Heart left ventricle (tissue), 16 donors: ENCODE measurements at regions of chr20 and their contacts with region 1.

Region 1: GRCh38 chr20:13119583-13119982 is 101.5 kb upstream of the ISM1 start:
- DNase-seq: peak in 1 of 5 donors; percentile 17
- ATAC-seq: peak in 3 of 4 donors; percentile 72 to 83 (median 72)
- H3K4me3 ChIP-seq: no peak overlapping the region
- H3K27ac ChIP-seq: no peak overlapping the region
- H3K4me1 ChIP-seq: no peaks in the 10 kb centered on the region
- H3K27me3 ChIP-seq: no peaks in the 10 kb centered on the region
- CTCF ChIP-seq: peak; percentile 80 to 91 (median 86)
- POLR2A ChIP-seq: no peak

Region 2: DNA sequence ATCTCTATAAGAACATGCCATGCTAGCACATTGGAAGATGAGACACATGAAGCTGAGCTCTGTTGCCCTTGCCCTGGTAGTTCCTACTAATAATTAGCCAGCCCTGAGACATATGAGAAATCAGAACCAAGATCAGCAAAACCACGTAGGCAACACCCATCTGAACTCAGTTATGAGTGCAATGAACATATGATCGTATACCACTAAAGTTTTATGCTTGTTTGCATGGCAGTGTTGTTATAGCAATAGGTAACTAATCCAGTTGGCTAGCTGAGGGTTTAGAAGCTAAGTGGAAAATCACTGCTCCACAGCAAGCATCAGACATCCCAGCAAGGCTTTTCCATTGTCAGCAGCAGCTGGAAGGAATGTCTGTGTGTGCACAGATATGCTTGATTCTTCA is 1021.2 kb before region 1 on chr20:
- intact Hi-C with region 1: no loop called
- DNase-seq: no peak
- ATAC-seq: no peak
- H3K4me3 ChIP-seq: no peak overlapping the region
- H3K27ac ChIP-seq: no peak overlapping the region
- H3K4me1 ChIP-seq: no peaks in the 10 kb centered on the region
- H3K27me3 ChIP-seq: no peaks in the 10 kb centered on the region
- CTCF ChIP-seq: no peak
- POLR2A ChIP-seq: no peak

Region 3: GRCh38 chr20:13041574-13042457 is 77.8 kb before region 1 on chr20:
- intact Hi-C with region 1: no loop called
- DNase-seq: no peak
- ATAC-seq: no peak
- H3K4me3 ChIP-seq: no peak overlapping the region
- H3K27ac ChIP-seq: no peak overlapping the region
- H3K4me1 ChIP-seq: peaks cover 0 to 9% (median 0%) of the 10 kb centered on the region in 12 donors
- H3K27me3 ChIP-seq: no peaks in the 10 kb centered on the region
- CTCF ChIP-seq: no peak
- POLR2A ChIP-seq: no peak

Region 4: DNA sequence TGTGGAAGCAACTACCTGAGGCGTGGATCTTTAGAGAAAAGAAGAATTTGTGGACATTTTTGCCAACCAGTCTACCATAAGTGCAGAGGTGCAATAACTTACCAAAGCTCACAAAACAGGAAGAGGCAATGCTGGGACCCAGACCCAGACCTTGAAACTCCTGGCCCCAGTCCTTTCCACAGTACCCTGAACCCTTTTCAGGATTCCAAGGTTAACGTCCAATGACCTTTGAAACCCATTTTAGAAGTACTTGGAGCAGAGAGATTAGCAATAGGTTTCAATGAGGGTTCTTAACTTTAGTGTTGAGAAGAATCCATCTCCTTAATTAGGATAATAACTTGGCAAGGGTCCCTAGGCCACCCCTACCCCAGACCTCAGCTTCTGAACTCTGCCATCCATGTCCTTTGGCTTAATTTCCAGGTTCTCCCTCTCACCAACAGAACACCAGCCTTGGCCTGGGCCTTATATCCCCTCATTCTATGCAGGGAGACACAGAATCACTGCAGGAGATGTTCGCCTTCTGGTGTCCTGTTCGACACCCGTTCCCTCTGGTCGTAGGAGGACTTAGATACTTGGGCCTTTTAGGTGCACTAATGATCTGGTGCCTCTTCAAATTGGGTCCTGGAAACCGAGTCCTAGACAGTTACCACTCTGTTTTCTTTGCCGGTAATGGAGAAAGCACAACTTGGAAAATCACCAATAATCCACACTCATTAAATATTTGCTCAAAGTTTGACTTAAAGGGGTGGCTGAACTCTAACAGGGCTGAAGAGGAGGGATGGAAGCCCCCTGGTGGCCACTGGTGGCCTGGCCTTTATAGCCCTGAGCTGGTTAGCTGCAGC is 142.1 kb after region 1 on chr20:
- intact Hi-C with region 1: loop called in 7 of 10 experiments (anchors 1 to 10 kb)
- DNase-seq: peak in 3 of 5 donors; percentile 37 to 53 (median 49)
- ATAC-seq: peak; percentile 55 to 83 (median 69)
- H3K4me3 ChIP-seq: no peak overlapping the region
- H3K27ac ChIP-seq: no peak overlapping the region
- H3K4me1 ChIP-seq: peaks cover 0 to 4% (median 0%) of the 10 kb centered on the region in 12 donors
- H3K27me3 ChIP-seq: no peaks in the 10 kb centered on the region
- CTCF ChIP-seq: peak; percentile 57 to 79 (median 70)
- POLR2A ChIP-seq: no peak

Region 5: GRCh38 chr20:13546497-13547131 is 427.0 kb after region 1 on chr20:
- intact Hi-C with region 1: loop called in 9 of 10 experiments (anchors 2 to 10 kb)
- DNase-seq: peak; percentile 45 to 75 (median 58)
- ATAC-seq: peak in 3 of 4 donors; percentile 41 to 58 (median 49)
- H3K4me3 ChIP-seq: no peak overlapping the region
- H3K27ac ChIP-seq: no peak overlapping the region
- H3K4me1 ChIP-seq: peaks cover 0 to 3% (median 0%) of the 10 kb centered on the region in 12 donors
- H3K27me3 ChIP-seq: no peaks in the 10 kb centered on the region
- CTCF ChIP-seq: peak; percentile 70 to 86 (median 82)
- POLR2A ChIP-seq: no peak

Region 6: DNA sequence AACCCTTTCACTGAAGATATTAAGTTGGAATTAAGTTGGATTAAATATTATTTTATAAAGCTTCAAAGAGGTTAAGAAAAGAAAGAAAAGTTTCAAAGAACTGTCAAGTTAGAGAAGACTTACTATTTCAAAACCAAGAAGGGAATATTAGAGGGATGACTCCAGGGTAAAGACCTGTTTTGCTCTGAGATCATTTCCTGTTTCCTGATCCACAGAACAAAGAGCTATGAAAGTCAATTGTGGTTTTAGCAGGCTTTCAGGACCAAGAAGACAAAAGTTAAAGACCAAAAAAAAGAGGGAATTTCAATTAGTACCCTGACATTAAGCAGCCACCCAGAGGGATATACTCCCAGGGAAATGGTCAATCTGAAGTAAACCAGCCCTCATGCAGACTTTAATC is 645.7 kb after region 1 on chr20:
- intact Hi-C with region 1: loop called in 6 of 10 experiments (anchors 5 to 10 kb)
- DNase-seq: no peak
- ATAC-seq: no peak
- H3K4me3 ChIP-seq: no peak overlapping the region
- H3K27ac ChIP-seq: no peak overlapping the region
- H3K4me1 ChIP-seq: peaks cover 0 to 6% (median 0%) of the 10 kb centered on the region in 12 donors
- H3K27me3 ChIP-seq: no peaks in the 10 kb centered on the region
- CTCF ChIP-seq: no peak
- POLR2A ChIP-seq: no peak

Region 7: DNA sequence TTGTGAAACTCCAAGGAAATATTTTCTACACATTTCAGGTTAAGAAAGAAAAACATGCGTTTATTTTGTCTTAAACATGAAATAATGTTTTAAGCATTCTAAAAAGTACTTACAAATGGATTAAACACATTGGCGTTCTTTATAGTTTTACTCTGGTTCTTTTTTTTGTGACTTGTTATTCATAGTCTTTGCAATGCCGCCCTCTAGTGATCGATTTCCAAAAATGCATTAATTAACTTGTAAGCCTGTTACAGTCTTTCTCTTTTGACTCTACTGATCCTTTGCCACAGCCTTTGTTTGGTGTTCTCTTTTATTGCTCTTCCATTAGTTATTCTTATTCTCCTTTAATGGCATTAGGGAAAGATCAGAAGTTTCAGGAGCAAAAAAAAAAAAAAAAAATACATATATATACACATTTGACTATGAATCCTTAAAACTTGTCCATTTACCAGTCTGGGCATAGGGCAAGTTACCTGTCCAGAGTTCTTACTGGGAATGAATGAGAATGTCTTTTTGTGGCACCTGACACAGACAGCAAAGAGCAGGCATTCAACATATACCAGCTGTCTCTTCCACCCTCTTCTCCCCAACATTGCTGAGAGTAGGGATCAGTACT is 935.7 kb after region 1 on chr20:
- intact Hi-C with region 1: loop called in 1 of 10 experiments (anchors 10 kb)
- DNase-seq: no peak
- ATAC-seq: no peak
- H3K4me3 ChIP-seq: no peak overlapping the region
- H3K27ac ChIP-seq: no peak overlapping the region
- H3K4me1 ChIP-seq: no peaks in the 10 kb centered on the region
- H3K27me3 ChIP-seq: no peaks in the 10 kb centered on the region
- CTCF ChIP-seq: peak; percentile 41 to 73 (median 59)
- POLR2A ChIP-seq: no peak